GM12878 (cell line): ENCODE measurements at regions of chr9 and their contacts with region 1.

Region 1: GRCh38 chr9:5510360-5510931 is at the start of gene PDCD1LG2:
- DNase-seq: peak; percentile 76
- ATAC-seq: peak; percentile 71
- H3K4me3 ChIP-seq: peak within 1 kb of the TSS; percentile 49
- H3K27ac ChIP-seq: peak within 1 kb of the TSS; percentile 82
- H3K4me1 ChIP-seq: peaks cover 39% of the 10 kb centered on the region
- H3K27me3 ChIP-seq: no peaks in the 10 kb centered on the region
- CTCF ChIP-seq: no peak
- EP300 ChIP-seq: peak in 1 of 2 experiments; percentile 89; a peak in 2 of 4 replicates
- POLR2A ChIP-seq: no peak
- RAD21 ChIP-seq: no peak
- polyA plus RNA-seq, gene PDCD1LG2: 1.5 to 2.5 TPM

Region 2: GRCh38 chr9:5408596-5408995 is 101.8 kb before region 1 on chr9:
- CTCF ChIA-PET with region 1: no interaction called
- POLR2A ChIA-PET with region 1: no interaction called
- RAD21 ChIA-PET with region 1: no interaction called
- SMC1A ChIA-PET with region 1: no interaction called
- in situ Hi-C with region 1: no loop called
- intact Hi-C with region 1: no loop called
- DNase-seq: no peak
- ATAC-seq: no peak
- H3K4me3 ChIP-seq: no peak overlapping the region
- H3K27ac ChIP-seq: no peak overlapping the region
- H3K4me1 ChIP-seq: no peaks in the 10 kb centered on the region
- H3K27me3 ChIP-seq: no peaks in the 10 kb centered on the region
- CTCF ChIP-seq: no peak
- EP300 ChIP-seq: no peak
- POLR2A ChIP-seq: no peak
- RAD21 ChIP-seq: no peak

Region 3: GRCh38 chr9:5459289-5459829 is 51.1 kb before region 1 on chr9:
- CTCF ChIA-PET with region 1: no interaction called
- POLR2A ChIA-PET with region 1: interaction called, 10 read pairs
- RAD21 ChIA-PET with region 1: interaction called, 28 read pairs
- SMC1A ChIA-PET with region 1: interaction called, 90 read pairs
- in situ Hi-C with region 1: no loop called
- intact Hi-C with region 1: loop called (anchors 2 kb)
- DNase-seq: no peak
- ATAC-seq: peak; percentile 55
- H3K4me3 ChIP-seq: peak overlapping the region; percentile 35
- H3K27ac ChIP-seq: peak overlapping the region; percentile 81
- H3K4me1 ChIP-seq: peaks cover 32% of the 10 kb centered on the region
- H3K27me3 ChIP-seq: no peaks in the 10 kb centered on the region
- CTCF ChIP-seq: no peak
- EP300 ChIP-seq: peak; percentile 69 to 84; a peak in 2 of 4 replicates
- POLR2A ChIP-seq: no peak
- RAD21 ChIP-seq: no peak

Region 4: GRCh38 chr9:5493679-5494511 is 16.6 kb before region 1 on chr9:
- CTCF ChIA-PET with region 1: interaction called, 15 read pairs
- POLR2A ChIA-PET with region 1: interaction called, 68 read pairs
- RAD21 ChIA-PET with region 1: interaction called, 144 read pairs
- SMC1A ChIA-PET with region 1: interaction called, 99 read pairs
- in situ Hi-C with region 1: no loop called
- intact Hi-C with region 1: loop called (anchors 1 kb)
- DNase-seq: peak; percentile 96
- ATAC-seq: peak; percentile 91
- H3K4me3 ChIP-seq: peak overlapping the region; percentile 30; the same call in 1 of the 2 replicates
- H3K27ac ChIP-seq: peak overlapping the region; percentile 92
- H3K4me1 ChIP-seq: peaks cover 16% of the 10 kb centered on the region
- H3K27me3 ChIP-seq: no peaks in the 10 kb centered on the region
- CTCF ChIP-seq: no peak
- EP300 ChIP-seq: peak in 1 of 2 experiments; percentile 65; a peak in 1 of 4 replicates
- POLR2A ChIP-seq: peak; percentile 63
- RAD21 ChIP-seq: 0 out of 2 replicates have a peak, but pooled peaks have one; percentile 9

Region 5: GRCh38 chr9:5524090-5524489 is 13.6 kb after region 1 on chr9:
- CTCF ChIA-PET with region 1: interaction called, 4 read pairs
- POLR2A ChIA-PET with region 1: interaction called, 67 read pairs
- RAD21 ChIA-PET with region 1: interaction called, 30 read pairs
- SMC1A ChIA-PET with region 1: interaction called, 87 read pairs
- in situ Hi-C with region 1: no loop called
- intact Hi-C with region 1: no loop called
- DNase-seq: no peak
- ATAC-seq: no peak
- H3K4me3 ChIP-seq: no peak overlapping the region
- H3K27ac ChIP-seq: no peak overlapping the region
- H3K4me1 ChIP-seq: peaks cover 18% of the 10 kb centered on the region
- H3K27me3 ChIP-seq: no peaks in the 10 kb centered on the region
- CTCF ChIP-seq: no peak
- EP300 ChIP-seq: no peak
- POLR2A ChIP-seq: no peak
- RAD21 ChIP-seq: no peak

Region 6: GRCh38 chr9:5557606-5558587 is 47.5 kb after region 1 on chr9:
- CTCF ChIA-PET with region 1: interaction called, 4 read pairs
- POLR2A ChIA-PET with region 1: interaction called, 21 read pairs
- RAD21 ChIA-PET with region 1: interaction called, 34 read pairs
- SMC1A ChIA-PET with region 1: interaction called, 19 read pairs
- in situ Hi-C with region 1: no loop called
- intact Hi-C with region 1: no loop called
- DNase-seq: no peak
- ATAC-seq: peak; percentile 88
- H3K4me3 ChIP-seq: no peak overlapping the region
- H3K27ac ChIP-seq: peak overlapping the region; percentile 66
- H3K4me1 ChIP-seq: peaks cover 27% of the 10 kb centered on the region
- H3K27me3 ChIP-seq: no peaks in the 10 kb centered on the region
- CTCF ChIP-seq: no peak
- EP300 ChIP-seq: no peak
- POLR2A ChIP-seq: no peak
- RAD21 ChIP-seq: no peak

Region 7: DNA sequence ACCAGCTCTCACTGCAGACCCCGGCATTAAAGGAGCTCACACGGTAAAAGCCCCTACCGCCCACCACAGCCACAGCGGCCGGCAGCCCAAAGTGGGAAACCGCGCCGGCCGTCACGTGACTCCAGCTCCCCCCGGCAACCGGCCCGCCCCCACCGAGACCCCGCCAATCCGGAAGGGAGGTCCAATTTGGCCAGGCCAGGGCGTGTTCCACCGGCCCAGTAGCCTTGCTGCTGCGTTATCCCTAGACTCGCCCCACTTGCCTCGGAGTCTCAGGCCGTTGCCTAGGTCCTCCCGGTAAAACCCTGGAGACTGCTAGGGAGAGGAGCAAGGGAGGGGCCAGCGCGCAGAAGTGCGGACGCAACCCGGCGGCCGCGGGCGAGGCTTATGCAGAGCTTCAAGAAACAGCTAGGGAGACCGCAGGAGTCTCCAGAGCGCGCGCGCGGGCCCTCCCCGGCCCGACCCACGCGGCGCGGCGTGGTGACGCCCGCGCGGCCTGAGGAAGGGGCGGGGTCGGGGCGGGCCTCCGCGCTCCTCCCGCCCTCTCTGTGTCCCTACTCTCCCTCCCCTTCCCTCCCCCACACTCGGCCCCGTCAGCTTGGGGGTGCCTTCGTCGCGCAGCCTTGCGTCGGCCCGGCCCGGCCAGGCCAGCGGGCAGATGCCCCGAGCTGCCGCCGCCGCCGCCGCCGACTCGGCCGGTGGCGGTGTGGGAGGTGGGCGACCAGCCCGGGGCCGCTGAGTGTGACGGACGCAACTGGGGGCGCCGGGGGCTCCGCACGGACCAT is 118.3 kb after region 1 on chr9 and contains the start of gene RIC1:
- CTCF ChIA-PET with region 1: no interaction called
- POLR2A ChIA-PET with region 1: interaction called, 10 read pairs
- RAD21 ChIA-PET with region 1: interaction called, 5 read pairs
- SMC1A ChIA-PET with region 1: interaction called, 6 read pairs
- in situ Hi-C with region 1: no loop called
- intact Hi-C with region 1: no loop called
- DNase-seq: peak; percentile 67
- ATAC-seq: peak; percentile 69
- H3K4me3 ChIP-seq: peak within 1 kb of the TSS; percentile 98
- H3K27ac ChIP-seq: peak within 1 kb of the TSS; percentile 78
- H3K4me1 ChIP-seq: peaks cover 33% of the 10 kb centered on the region
- H3K27me3 ChIP-seq: no peaks in the 10 kb centered on the region
- CTCF ChIP-seq: no peak
- EP300 ChIP-seq: 0 out of 4 replicates have a peak, but pooled peaks of 1 of the 2 experiments have one; percentile 9
- POLR2A ChIP-seq: peak; percentile 84
- RAD21 ChIP-seq: no peak
- polyA plus RNA-seq, gene RIC1: 6.2 to 7.1 TPM